A673 (cell line): ENCODE measurements at regions of chr17 and their contacts with region 1.

Region 1: GRCh38 chr17:27879987-27880608 is 13.1 kb downstream of the LYRM9 start:
- DNase-seq: peak; percentile 71
- H3K4me3 ChIP-seq: no peak overlapping the region
- H3K27ac ChIP-seq: no peak overlapping the region
- H3K4me1 ChIP-seq: no peaks in the 10 kb centered on the region
- H3K27me3 ChIP-seq: no peaks in the 10 kb centered on the region
- CTCF ChIP-seq: peak; percentile 79

Region 2: GRCh38 chr17:27654654-27655524 is 225.2 kb before region 1 on chr17:
- CTCF ChIA-PET with region 1: interaction called, 5 read pairs
- POLR2A ChIA-PET with region 1: no interaction called
- intact Hi-C with region 1: loop called (anchors 5 kb)
- DNase-seq: peak; percentile 77
- H3K4me3 ChIP-seq: no peak overlapping the region
- H3K27ac ChIP-seq: no peak overlapping the region
- H3K4me1 ChIP-seq: no peaks in the 10 kb centered on the region
- H3K27me3 ChIP-seq: no peaks in the 10 kb centered on the region
- CTCF ChIP-seq: peak; percentile 95

Region 3: GRCh38 chr17:27805520-27806146 is 74.5 kb before region 1 on chr17:
- CTCF ChIA-PET with region 1: interaction called, 36 read pairs
- POLR2A ChIA-PET with region 1: no interaction called
- intact Hi-C with region 1: loop called (anchors 2 kb)
- DNase-seq: peak; percentile 89
- H3K4me3 ChIP-seq: peak overlapping the region; percentile 30
- H3K27ac ChIP-seq: no peak overlapping the region
- H3K4me1 ChIP-seq: no peaks in the 10 kb centered on the region
- H3K27me3 ChIP-seq: no peaks in the 10 kb centered on the region
- CTCF ChIP-seq: peak; percentile 84

Region 4: DNA sequence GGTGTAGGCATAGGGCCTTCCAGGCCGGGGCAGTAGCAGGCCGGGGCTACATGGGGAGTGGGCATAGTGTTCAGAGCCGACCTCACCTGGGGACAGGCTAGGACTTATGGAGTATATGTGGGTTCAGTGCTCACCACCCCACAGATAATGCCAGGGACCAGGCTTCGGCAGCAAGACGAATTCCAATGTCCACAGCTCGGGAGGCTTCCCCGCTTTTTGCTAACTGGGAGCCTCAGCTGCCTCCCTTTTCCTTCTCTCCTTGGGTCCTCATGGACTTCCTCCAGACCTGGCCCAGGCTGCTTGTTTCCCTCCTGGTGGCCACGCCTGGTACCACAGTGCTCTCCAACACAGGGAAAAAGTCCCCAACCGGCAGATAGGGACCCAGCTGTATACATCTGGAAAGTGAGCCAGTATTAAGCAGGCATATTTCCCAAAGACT is 546.0 kb after region 1 on chr17:
- CTCF ChIA-PET with region 1: interaction called, 14 read pairs
- POLR2A ChIA-PET with region 1: no interaction called
- intact Hi-C with region 1: no loop called
- DNase-seq: peak; percentile 47
- H3K4me3 ChIP-seq: no peak overlapping the region
- H3K27ac ChIP-seq: no peak overlapping the region
- H3K4me1 ChIP-seq: no peaks in the 10 kb centered on the region
- H3K27me3 ChIP-seq: peaks cover under 1% of the 10 kb centered on the region
- CTCF ChIP-seq: peak; percentile 53